RWPE1 (cell line): ENCODE measurements at regions of chr11 and their contacts with region 1.

Region 1: GRCh38 chr11:95154514-95154913 is 64.9 kb downstream of the ENDOD1 start:
- DNase-seq: peak; percentile 68
- H3K27ac ChIP-seq: no peak overlapping the region
- CTCF ChIP-seq: peak; percentile 65

Region 2: DNA sequence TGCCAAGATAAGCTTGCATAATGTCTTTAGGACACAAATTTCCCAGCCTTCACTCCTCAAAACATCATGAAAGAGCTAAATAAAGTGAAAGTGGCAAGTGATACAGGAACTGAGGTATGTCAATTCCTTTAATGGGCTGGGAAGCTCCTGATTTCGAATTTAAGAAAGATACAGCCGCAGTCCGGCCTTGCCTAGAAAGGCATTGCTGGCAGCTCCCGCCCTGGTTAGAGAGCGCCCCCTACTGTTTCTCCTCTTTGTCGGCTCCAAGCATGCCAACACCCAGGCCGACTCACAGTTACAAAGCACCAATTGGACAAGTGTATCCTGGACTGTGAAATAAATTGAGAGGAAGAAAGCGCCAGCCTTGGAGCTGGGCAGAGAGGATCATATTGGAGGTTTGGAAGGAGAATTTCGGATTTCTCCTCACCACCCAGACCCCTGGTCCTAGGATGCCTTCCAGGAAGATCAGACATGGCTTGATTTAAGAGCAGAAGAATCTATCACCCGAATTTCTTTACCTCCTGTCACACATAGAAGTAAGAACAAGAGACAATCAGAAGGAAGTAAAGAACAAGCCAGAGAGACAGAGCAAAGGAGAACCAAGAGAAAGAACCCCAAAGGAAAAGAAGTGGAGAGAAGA is 551.1 kb after region 1 on chr11:
- CTCF ChIA-PET with region 1: interaction called, 31 read pairs
- POLR2A ChIA-PET with region 1: no interaction called
- DNase-seq: peak; percentile 62
- H3K27ac ChIP-seq: no peak overlapping the region
- CTCF ChIP-seq: peak; percentile 91

Region 3: GRCh38 chr11:95762534-95762933 is 608.0 kb after region 1 on chr11:
- CTCF ChIA-PET with region 1: interaction called, 15 read pairs
- POLR2A ChIA-PET with region 1: no interaction called
- DNase-seq: no peak
- H3K27ac ChIP-seq: no peak overlapping the region
- CTCF ChIP-seq: no peak